ENCODE measurements at regions of chr4 and their contacts with region 1.

Region 1: DNA sequence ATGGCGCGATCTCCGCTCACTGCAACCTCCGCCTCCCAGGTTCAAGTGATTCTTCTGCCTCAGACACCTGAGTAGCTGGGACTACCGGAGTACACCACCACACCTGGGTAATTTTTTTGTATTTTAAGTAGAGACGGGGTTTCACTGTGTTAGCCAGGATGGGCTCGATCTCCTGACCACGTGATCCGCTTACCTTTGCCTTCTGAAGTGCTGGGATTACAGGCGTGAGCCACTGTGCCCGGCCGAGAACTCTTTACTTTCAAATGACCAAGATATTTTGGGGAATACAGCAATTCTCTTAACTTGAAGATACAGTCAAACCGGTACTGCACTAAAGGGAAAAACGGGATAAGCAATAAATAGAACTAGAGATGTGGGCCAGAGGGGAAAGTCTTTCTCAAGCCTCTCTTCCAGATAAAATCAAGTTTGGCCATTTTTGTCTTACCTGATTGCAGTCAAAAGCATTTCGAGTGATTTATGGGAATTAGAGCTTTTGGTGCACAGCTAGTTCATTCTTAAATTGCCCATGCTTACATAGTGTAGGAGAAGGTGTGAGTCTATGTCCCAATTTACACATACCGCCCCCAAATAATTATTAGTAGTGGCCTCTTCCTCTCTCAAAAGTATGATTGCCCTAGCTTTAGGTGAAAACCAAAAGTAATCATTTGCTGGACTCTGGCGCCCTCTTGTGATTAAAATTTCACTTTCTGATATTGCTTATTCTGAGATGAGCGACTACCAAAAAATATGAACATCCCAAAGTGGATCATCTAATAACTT is 53.2 kb upstream of the ABCG2 start:
- DNase-seq: no peak
- ATAC-seq: peak; percentile 87
- H3K4me3 ChIP-seq: no peak overlapping the region
- H3K27ac ChIP-seq: no peak overlapping the region
- H3K4me1 ChIP-seq: no peaks in the 10 kb centered on the region
- H3K27me3 ChIP-seq: no peaks in the 10 kb centered on the region
- CTCF ChIP-seq: peak; percentile 43 to 77 (median 69)
- EP300 ChIP-seq: no peak
- POLR2A ChIP-seq: no peak
- RAD21 ChIP-seq: peak; percentile 95

Region 2: GRCh38 chr4:87601361-87601760 is 610.3 kb before region 1 on chr4:
- CTCF ChIA-PET with region 1: no interaction called
- POLR2A ChIA-PET with region 1: no interaction called
- RAD21 ChIA-PET with region 1: no interaction called
- SMC1A ChIA-PET with region 1: no interaction called
- in situ Hi-C with region 1: no loop called
- intact Hi-C with region 1: no loop called
- DNase-seq: no peak
- ATAC-seq: no peak
- H3K4me3 ChIP-seq: no peak overlapping the region
- H3K27ac ChIP-seq: no peak overlapping the region
- H3K4me1 ChIP-seq: no peaks in the 10 kb centered on the region
- H3K27me3 ChIP-seq: no peaks in the 10 kb centered on the region
- CTCF ChIP-seq: no peak
- EP300 ChIP-seq: no peak
- POLR2A ChIP-seq: no peak
- RAD21 ChIP-seq: no peak

Region 3: DNA sequence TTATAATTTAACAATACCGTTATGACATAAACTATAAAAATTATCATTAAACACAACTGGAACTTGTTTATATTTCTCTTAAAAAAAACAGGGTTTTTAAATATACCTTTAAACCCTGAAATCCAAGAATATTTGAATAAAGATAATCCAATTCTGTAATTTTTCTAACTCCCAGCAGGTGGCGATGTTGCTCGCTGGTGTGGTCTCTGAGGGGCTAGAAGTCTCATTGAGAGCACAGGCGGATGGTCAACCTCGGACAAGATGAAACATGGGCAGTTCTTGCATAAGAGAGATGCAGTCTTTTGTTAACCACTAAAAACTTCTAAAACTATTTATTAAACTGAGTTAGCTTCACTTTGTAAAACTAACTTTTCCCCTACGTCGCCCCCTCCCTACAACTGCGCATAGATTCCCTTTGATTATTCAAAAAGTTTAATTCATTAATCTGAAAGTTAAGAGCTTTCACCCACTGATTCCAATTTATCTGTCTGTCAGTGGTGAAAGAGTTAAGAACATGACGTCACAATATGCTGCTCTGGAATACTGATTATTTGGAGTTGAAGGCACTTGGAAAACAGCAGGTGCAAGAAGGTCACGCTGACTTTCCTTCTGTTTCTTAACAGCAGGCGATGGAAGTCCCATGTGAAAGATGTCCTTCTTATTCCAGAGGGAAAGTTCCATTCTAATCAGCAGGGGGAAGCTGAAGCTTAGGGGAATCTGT is 532.1 kb before region 1 on chr4:
- CTCF ChIA-PET with region 1: interaction called, 10 read pairs
- POLR2A ChIA-PET with region 1: no interaction called
- RAD21 ChIA-PET with region 1: interaction called, 3 read pairs
- SMC1A ChIA-PET with region 1: interaction called, 5 read pairs
- in situ Hi-C with region 1: loop called (anchors 25 kb)
- intact Hi-C with region 1: loop called (anchors 2 kb)
- DNase-seq: peak; percentile 2
- ATAC-seq: peak; percentile 61; the same call in 2 of the 3 replicates
- H3K4me3 ChIP-seq: no peak overlapping the region
- H3K27ac ChIP-seq: no peak overlapping the region
- H3K4me1 ChIP-seq: peaks cover 5% of the 10 kb centered on the region; the same call in 1 of the 2 replicates
- H3K27me3 ChIP-seq: no peaks in the 10 kb centered on the region
- CTCF ChIP-seq: peak; percentile 59 to 73 (median 66)
- EP300 ChIP-seq: no peak
- POLR2A ChIP-seq: no peak
- RAD21 ChIP-seq: peak; percentile 86

Region 4: GRCh38 chr4:87973283-87974169 is 238.1 kb before region 1 on chr4:
- CTCF ChIA-PET with region 1: interaction called, 12 read pairs
- POLR2A ChIA-PET with region 1: no interaction called
- RAD21 ChIA-PET with region 1: interaction called, 5 read pairs
- SMC1A ChIA-PET with region 1: interaction called, 5 read pairs
- in situ Hi-C with region 1: no loop called
- intact Hi-C with region 1: loop called (anchors 5 kb)
- DNase-seq: no peak
- ATAC-seq: peak; percentile 93
- H3K4me3 ChIP-seq: no peak overlapping the region
- H3K27ac ChIP-seq: no peak overlapping the region
- H3K4me1 ChIP-seq: no peaks in the 10 kb centered on the region
- H3K27me3 ChIP-seq: no peaks in the 10 kb centered on the region; a peak in 1 of 4 replicates
- CTCF ChIP-seq: peak; percentile 69 to 78 (median 76)
- EP300 ChIP-seq: no peak
- POLR2A ChIP-seq: no peak
- RAD21 ChIP-seq: peak; percentile 61; the same call in 1 of the 2 replicates

Region 5: GRCh38 chr4:88196523-88197185 is 15.0 kb before region 1 on chr4:
- CTCF ChIA-PET with region 1: interaction called, 10 read pairs
- POLR2A ChIA-PET with region 1: interaction called, 5 read pairs
- RAD21 ChIA-PET with region 1: no interaction called
- SMC1A ChIA-PET with region 1: no interaction called
- in situ Hi-C with region 1: no loop called
- intact Hi-C with region 1: no loop called
- DNase-seq: no peak
- ATAC-seq: no peak
- H3K4me3 ChIP-seq: no peak overlapping the region
- H3K27ac ChIP-seq: no peak overlapping the region
- H3K4me1 ChIP-seq: no peaks in the 10 kb centered on the region
- H3K27me3 ChIP-seq: no peaks in the 10 kb centered on the region
- CTCF ChIP-seq: no peak
- EP300 ChIP-seq: no peak
- POLR2A ChIP-seq: no peak
- RAD21 ChIP-seq: no peak

Region 6: DNA sequence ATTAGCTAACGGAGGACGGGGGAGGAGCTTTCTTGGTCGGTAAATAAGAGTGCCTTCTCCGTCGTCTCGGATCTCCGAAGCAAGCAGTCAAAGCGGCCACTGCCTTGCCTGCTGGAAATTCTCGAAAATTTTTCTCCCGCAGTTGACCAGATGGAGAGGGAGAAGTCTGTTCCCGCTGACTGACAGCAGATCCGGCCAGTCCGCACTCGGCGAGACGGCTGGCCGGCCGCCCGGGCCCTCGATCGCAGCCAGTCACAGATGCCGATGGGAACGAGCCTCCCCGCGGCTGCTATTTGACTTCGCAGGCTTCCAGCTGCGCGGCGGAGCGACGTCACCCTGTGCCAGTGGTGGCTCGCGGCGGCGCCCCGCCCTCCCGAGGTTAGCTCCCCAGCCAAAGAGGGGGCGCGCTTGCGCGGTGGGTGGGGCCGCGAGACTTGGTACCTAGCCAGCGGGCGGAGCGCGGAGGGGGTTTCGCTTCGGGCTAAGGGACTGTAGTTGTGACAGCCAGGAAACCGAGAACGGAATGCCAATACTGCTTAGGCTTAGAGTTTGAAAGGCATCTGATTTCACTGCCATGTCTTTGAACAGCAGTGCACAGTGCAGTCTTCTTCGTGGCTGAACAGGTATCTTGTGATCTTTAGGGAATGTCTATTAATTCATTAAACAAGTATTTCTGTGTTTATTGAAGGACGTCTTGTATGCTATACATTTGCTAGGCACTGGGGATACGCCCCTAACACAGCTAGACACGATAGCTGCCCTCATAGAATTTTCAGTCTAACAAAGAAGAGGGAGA is 73.0 kb after region 1 on chr4 and contains the start of gene PPM1K:
- CTCF ChIA-PET with region 1: interaction called, 5 read pairs
- POLR2A ChIA-PET with region 1: no interaction called
- RAD21 ChIA-PET with region 1: no interaction called
- SMC1A ChIA-PET with region 1: interaction called, 10 read pairs
- in situ Hi-C with region 1: no loop called
- intact Hi-C with region 1: no loop called
- DNase-seq: peak; percentile 93
- ATAC-seq: peak; percentile 88
- H3K4me3 ChIP-seq: peak within 1 kb of the TSS; percentile 73
- H3K27ac ChIP-seq: peak within 1 kb of the TSS; percentile 98
- H3K4me1 ChIP-seq: 0 out of 2 replicates have a peak, but pooled peaks cover 5% of the 10 kb centered on the region
- H3K27me3 ChIP-seq: no peaks in the 10 kb centered on the region
- CTCF ChIP-seq: no peak
- EP300 ChIP-seq: 0 out of 4 replicates have a peak, but pooled peaks of 1 of the 2 experiments have one; percentile 4
- POLR2A ChIP-seq: no peak; the same call in none of the 2 replicates
- RAD21 ChIP-seq: no peak
- polyA plus RNA-seq, gene PPM1K: 25.3 to 25.4 TPM

Region 7: DNA sequence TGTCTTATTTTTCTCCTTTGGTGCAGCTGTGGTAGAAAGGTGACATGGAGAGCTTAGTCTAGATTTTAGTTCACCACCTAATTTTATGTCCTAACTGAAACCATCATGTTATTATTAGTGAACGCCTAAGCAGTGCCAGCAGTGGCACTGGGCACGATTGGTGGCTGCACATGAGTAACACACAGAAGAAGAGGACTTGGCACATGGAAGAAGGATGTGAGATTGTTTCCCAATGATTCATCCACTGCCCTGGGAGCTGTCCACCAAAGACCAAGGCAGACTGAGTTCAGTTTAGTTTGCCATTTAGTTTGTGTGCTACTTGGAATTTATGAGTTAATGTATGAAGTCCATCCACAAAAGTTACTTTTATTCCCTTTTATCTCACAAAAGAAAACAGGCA is 554.1 kb after region 1 on chr4:
- CTCF ChIA-PET with region 1: no interaction called
- POLR2A ChIA-PET with region 1: no interaction called
- RAD21 ChIA-PET with region 1: no interaction called
- SMC1A ChIA-PET with region 1: no interaction called
- in situ Hi-C with region 1: no loop called
- intact Hi-C with region 1: no loop called
- DNase-seq: no peak
- ATAC-seq: 0 out of 3 replicates have a peak, but pooled peaks have one; percentile 15
- H3K4me3 ChIP-seq: no peak overlapping the region
- H3K27ac ChIP-seq: no peak overlapping the region
- H3K4me1 ChIP-seq: no peaks in the 10 kb centered on the region
- H3K27me3 ChIP-seq: no peaks in the 10 kb centered on the region
- CTCF ChIP-seq: no peak
- EP300 ChIP-seq: no peak
- POLR2A ChIP-seq: no peak
- RAD21 ChIP-seq: no peak